Dendritic cell treated with granulocyte-macrophage colony-stimulating factor and Interleukin-4, amounts not matched to agents 40 ng/mL and 50 ng/mL, for 4 days (primary cell): ENCODE measurements at regions of chr3 and their contacts with region 1.

Region 1: GRCh38 chr3:167350245-167350862 is 29.7 kb downstream of the ZBBX start:
- H3K4me3 Mint-ChIP-seq: no peak overlapping the region
- H3K27ac Mint-ChIP-seq: no peak overlapping the region
- H3K4me1 Mint-ChIP-seq: no peaks in the 10 kb centered on the region
- H3K27me3 Mint-ChIP-seq: no peaks in the 10 kb centered on the region

Region 2: GRCh38 chr3:165854696-165855095 is 1495.7 kb before region 1 on chr3:
- intact Hi-C with region 1: loop called (anchors 2 kb)
- H3K4me3 Mint-ChIP-seq: no peak overlapping the region
- H3K27ac Mint-ChIP-seq: no peak overlapping the region
- H3K4me1 Mint-ChIP-seq: no peaks in the 10 kb centered on the region
- H3K27me3 Mint-ChIP-seq: no peaks in the 10 kb centered on the region

Region 3: DNA sequence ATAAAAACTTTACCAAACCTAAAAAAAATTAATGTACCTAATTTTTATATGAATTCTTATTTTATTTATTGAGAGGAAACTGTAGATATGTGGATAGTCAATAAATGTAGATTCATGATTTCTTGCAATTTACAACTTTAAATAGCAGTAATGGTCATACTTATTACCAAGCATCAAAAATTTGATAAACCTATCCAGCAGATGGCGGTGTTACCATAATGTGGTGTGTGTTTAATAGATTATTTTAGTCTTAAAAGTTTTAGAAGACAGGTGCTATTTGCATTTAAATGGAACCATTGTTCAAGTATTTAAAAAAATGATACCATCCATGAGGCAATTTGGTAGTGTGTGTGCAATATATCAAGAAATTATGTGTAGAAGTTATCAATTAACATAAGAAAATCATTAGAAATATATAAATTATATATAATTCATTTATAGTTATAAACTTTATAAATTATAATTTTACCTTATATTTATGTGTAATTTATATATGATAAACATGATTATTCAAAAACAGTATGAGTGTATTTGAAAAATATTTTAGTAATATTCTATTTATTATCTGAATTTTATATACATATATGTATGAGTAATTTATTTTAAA is 1337.2 kb before region 1 on chr3:
- intact Hi-C with region 1: loop called (anchors 5 kb)
- H3K4me3 Mint-ChIP-seq: no peak overlapping the region
- H3K27ac Mint-ChIP-seq: no peak overlapping the region
- H3K4me1 Mint-ChIP-seq: no peaks in the 10 kb centered on the region
- H3K27me3 Mint-ChIP-seq: no peaks in the 10 kb centered on the region

Region 4: GRCh38 chr3:166837535-166837934 is 512.8 kb before region 1 on chr3:
- intact Hi-C with region 1: loop called (anchors 10 kb)
- H3K4me3 Mint-ChIP-seq: no peak overlapping the region
- H3K27ac Mint-ChIP-seq: no peak overlapping the region
- H3K4me1 Mint-ChIP-seq: no peaks in the 10 kb centered on the region
- H3K27me3 Mint-ChIP-seq: no peaks in the 10 kb centered on the region